Mammary epithelial cell (primary cell): ENCODE measurements at regions of chr13 and their contacts with region 1.

Region 1: GRCh38 chr13:66353664-66354063 is 876.5 kb downstream of the PCDH9 start:
- DNase-seq: no peak
- H3K4me3 ChIP-seq: no peak overlapping the region
- H3K27ac ChIP-seq: no peak overlapping the region
- H3K4me1 ChIP-seq: no peaks in the 10 kb centered on the region
- H3K27me3 ChIP-seq: no peaks in the 10 kb centered on the region
- CTCF ChIP-seq: no peak

Region 2: DNA sequence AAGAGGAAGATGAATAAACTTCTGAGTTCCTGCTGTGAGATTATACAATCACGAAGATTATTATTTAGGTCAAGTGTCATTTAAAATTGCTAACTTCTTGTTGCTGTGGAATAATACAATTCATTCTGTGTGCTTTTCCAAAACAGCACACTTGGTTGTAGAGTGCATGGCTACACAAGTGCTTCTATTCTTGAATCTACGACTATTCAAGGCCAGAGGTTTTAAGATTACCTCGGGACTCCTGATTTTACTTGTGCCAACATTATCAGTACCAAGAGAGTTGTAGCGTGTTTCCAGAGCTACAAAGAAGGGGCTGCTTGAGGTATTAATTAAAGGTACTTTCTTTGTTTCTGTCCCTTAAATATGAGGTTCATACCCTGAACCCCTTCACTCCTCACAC is 1110.5 kb after region 1 on chr13:
- CTCF ChIA-PET with region 1: no interaction called
- dilution Hi-C with region 1: loop called (anchors 10 kb)
- in situ Hi-C with region 1: no loop called
- intact Hi-C with region 1: no loop called
- DNase-seq: no peak
- H3K4me3 ChIP-seq: no peak overlapping the region
- H3K27ac ChIP-seq: no peak overlapping the region
- H3K4me1 ChIP-seq: no peaks in the 10 kb centered on the region
- H3K27me3 ChIP-seq: no peaks in the 10 kb centered on the region
- CTCF ChIP-seq: no peak